ENCODE measurements at regions of chr4 and their contacts with region 1.

Region 1: DNA sequence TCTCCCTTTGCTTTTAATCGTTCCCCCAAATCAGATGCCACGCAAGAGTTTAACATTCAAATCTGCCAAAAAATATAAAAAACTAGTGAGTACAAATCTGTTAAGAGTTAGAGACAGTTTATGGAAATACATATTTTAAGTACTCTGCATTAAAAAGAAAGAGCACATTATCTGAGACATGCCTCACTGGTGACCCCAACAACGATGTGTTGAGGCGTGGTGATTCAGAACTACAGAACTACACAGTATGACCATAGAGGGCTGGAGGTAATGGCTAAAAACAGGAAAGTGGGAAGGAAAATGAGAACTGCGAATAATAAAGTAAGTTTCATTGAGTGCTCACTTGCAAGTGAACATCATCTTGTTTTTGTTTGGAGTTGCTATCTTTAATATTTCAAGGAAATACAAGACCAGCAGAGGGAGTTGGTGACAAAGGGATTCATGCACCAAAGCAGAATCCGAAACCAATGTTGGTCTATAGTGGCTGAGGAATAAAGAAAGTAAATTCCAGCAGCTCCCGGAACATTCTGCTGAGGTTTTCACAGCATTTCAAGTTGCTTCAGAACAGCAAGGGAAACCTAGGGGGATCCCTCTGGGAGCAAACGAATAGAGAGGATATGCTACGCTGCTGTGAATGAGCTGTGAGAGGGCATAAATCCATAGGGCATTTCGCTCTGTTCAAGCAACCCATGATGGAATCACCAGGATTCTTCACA is 92.2 kb downstream of the DCHS2 start:
- DNase-seq: peak in 1 of 7 donors; percentile 2
- H3K4me3 ChIP-seq: peak overlapping the region in 1 of 4 donors; percentile 29
- H3K27ac ChIP-seq: no peak overlapping the region
- H3K4me1 ChIP-seq: no peaks in the 10 kb centered on the region
- H3K27me3 ChIP-seq: no peaks in the 10 kb centered on the region
- CTCF ChIP-seq: peak; percentile 11 to 64 (median 38)
- POLR2A ChIP-seq: no peak

Region 2: DNA sequence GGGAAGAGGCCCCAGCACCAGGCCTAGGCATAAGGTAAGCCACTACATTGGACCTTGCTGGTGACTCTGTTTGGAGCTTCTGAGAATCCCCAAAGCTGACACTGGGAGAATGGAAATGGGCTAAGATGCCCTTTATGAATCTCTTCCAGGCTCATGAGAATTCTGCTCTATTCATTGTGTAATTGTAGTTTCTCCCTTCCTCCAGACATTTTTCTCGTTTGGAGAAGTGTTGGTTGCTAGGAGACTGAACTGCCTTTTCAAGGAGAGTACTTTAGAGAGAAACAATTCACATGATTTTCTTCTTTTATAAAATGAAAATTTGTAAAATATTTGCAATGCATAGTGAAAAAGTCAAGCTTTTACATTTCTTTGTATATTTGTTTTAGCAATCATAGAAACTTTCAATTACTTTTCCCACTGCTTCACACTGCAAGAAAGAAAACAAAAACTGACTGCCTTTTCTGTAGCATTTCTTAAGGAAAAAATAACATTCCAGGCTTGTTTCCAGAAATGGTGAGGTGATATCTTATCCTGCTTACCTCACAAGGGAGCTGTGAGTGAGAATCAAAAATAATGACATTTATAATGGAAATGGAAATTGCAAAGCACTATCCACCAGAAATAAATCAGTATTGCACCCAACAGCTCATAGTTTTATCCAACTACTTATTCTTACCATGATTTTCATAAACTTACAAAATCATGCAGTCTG is 117.1 kb after region 1 on chr4:
- intact Hi-C with region 1: loop called in 1 of 2 experiments (anchors 10 kb)
- DNase-seq: no peak
- H3K4me3 ChIP-seq: no peak overlapping the region
- H3K27ac ChIP-seq: no peak overlapping the region
- H3K4me1 ChIP-seq: no peaks in the 10 kb centered on the region
- H3K27me3 ChIP-seq: no peaks in the 10 kb centered on the region
- CTCF ChIP-seq: no peak
- POLR2A ChIP-seq: no peak